ENCODE measurements at regions of chr9 and their contacts with region 1.

Region 1: DNA sequence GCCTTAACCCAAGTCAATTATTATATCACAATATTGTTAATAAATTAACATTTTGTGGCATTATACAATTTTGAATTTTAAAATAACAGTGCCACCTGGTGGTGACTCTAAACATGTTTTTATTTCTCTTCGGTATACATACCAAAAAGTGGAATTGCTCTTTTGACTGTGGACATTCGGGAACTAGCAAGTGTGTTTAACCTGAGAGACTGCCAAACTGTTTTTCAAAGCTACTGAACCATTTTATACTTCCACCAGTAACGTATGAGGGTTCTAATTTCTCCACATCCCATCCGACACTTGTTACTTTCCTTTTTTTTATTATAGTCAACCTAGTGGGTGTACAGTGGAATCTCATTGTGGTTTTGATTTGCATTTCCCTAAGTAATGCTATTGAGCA is 18.3 kb upstream of the HSDL2 start:
- DNase-seq: peak; percentile 29
- CTCF ChIP-seq: peak; percentile 31

Region 2: GRCh38 chr9:111759762-111760639 is 601.6 kb before region 1 on chr9:
- CTCF ChIA-PET with region 1: interaction called, 19 read pairs
- POLR2A ChIA-PET with region 1: no interaction called
- DNase-seq: peak; percentile 66
- CTCF ChIP-seq: peak; percentile 57

Region 3: DNA sequence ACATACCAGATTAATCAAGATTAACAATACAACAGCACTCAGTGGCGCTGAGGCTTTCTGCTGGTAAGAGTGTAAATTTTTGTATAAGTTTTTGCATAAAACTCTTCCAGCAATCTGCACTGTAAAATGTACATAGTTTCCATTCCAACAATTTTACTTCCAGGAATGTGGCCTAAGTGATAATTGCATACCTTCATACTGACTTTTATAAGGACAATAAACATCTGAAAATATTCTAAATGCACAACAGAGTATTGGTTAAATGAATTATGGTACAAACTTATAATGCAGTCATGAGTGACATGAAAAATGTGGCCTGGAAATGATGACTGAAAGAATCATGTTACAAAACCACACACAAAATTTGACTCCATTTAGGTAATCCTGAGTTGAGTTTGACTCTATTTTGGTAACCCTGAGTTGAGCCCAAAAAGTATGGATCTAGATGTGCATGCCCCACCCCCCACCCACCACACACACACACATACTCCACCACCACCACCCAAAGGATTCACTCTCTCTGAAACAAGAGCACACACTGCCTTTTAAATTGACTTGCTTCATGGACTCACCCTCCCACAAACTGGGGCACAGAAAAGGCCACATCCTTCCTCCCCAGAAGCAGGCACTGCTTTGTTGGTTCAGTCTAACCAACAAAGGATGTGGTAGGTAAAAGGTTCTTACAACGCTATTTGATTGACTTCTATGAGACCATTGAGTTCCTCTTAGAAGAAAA is 324.2 kb before region 1 on chr9:
- CTCF ChIA-PET with region 1: no interaction called
- POLR2A ChIA-PET with region 1: no interaction called
- DNase-seq: peak; percentile 52
- CTCF ChIP-seq: no peak

Region 4: DNA sequence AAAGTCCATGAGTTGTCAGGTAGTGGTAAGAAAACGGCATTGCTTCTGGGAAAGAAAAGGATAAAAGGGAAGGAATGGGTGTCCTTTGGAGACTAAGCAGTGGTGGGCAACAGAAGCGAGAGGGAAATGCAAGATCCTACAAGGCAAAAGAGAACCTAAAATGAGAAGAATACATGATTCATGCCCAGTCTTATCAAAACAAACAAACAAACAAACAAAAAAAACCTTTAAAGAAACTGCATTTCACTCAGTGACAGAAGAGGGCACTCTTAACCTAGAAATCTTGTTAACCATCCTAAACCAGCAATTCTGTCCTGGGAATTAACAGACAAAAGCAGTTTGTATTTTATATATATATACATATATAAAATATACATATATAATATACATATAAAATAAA is 275.0 kb before region 1 on chr9:
- CTCF ChIA-PET with region 1: interaction called, 38 read pairs
- POLR2A ChIA-PET with region 1: no interaction called
- DNase-seq: no peak
- CTCF ChIP-seq: peak; percentile 50

Region 5: DNA sequence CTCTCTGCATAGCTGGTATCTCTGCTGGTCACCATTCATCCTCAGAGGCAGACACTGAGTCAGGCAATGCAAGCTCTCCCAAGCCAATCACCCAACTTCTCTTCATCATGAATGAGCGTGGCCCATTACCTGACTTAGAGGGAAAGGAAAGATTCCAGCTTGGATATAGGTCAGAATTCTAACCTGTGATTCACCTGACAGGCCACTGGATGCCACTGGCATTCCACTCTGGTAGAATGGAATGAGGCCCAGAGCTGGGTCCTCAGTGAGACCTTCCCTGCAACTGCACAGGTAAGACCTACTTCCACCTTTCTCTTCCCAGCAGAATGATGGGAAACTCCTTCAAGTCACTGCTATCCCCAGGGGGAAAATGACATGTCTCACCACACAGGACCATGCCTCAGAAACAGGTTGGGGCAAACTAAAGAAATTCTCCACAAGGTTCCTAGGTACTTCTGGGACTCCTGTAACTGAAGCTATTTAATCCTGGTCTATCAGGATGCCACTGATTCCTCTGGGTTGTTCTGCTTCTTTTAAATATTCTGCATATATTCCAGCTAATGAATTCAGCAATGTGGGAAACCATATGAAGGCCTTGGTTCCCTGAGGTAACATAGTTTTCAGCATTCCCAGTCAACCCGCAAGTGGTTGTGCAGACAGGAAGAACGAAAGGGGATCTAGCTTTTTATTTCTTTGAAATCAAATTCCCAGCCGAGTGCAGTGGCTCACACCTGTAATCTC is 248.5 kb before region 1 on chr9:
- CTCF ChIA-PET with region 1: interaction called, 43 read pairs
- POLR2A ChIA-PET with region 1: no interaction called
- DNase-seq: peak; percentile 29
- CTCF ChIP-seq: peak; percentile 50

Region 6: GRCh38 chr9:112348257-112349007 is 13.2 kb before region 1 on chr9:
- CTCF ChIA-PET with region 1: interaction called, 19 read pairs
- POLR2A ChIA-PET with region 1: no interaction called
- DNase-seq: peak; percentile 24
- CTCF ChIP-seq: no peak

Region 7: DNA sequence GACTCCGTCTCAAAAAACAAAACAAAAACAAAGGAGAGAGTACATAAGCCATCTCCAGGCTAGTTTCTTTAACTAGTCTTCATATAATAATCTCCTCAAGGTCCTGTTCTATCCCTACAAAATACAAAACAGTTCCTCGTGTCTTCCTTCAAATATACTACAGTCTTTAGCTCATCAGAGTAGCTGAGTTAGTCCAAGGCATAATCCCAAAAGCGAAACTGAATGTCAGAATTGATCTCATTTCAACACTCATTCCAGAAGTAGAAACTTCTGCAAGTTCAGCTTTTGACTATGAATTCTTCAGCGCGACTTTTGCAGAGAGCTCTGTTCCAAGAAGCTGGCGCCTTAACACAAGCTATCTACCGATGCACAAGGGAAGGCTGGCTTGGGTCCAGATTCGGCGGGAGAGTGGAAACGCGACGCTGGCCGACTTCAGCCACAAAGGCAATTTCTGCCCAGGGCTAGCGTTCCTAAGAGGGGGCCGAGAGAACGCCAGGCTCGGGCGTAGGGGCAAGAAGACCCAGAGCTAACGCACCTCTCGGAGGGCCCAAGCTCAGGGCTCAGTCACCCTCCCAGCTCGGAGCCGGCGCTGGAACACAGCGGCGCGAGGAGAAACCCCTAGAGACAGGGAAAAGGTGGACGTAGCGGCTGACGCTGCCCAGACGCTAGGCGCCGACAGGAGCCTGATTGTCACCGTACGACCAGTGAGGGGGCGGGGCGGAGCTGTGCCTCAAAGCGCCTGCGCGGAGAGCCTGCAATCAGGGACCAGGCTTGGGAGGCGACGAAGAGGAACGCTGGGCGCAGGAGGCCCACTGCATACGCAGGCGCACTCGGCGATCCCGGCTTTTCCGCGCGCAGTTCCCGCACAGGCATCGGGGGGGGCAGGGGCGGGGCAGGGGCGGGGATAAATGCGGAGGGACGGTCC is 17.8 kb after region 1 on chr9:
- CTCF ChIA-PET with region 1: interaction called, 36 read pairs
- POLR2A ChIA-PET with region 1: no interaction called
- DNase-seq: peak; percentile 97
- CTCF ChIP-seq: no peak

Region 8: DNA sequence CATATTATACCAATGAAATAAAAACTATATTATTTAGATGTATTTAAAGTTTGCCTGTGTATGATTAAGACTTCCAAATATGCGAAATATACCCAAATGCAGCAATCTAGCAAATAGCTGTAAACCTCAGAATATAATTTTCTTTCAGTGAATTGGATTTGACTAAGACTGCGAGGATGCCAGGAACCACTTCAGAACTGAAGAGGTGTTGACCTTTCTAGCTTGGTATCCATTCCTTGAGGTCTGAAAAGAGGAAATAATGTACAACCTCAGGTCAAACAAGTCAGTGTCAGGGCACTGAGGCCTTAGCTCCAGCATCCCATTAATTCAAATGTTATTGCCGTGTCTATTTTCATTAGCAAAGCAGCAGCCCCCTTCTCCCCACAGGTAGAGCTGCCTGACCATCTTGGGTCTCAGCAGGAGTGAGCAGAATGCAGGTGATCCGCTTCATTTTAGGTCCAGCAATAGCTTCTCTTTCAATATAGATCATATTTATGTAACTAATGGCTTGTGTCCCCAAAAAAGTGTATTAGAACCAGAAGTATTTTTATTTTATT is 225.1 kb after region 1 on chr9:
- CTCF ChIA-PET with region 1: no interaction called
- POLR2A ChIA-PET with region 1: no interaction called
- DNase-seq: no peak
- CTCF ChIP-seq: no peak

Measured in GM10248 (cell line).